ENCODE measurements at regions of chr19 and their contacts with region 1.

Region 1: GRCh38 chr19:35352448-35353304 is 5.0 kb downstream of the FFAR1 start:
- DNase-seq: peak; percentile 46 to 79 (median 62)
- ATAC-seq: peak; percentile 78 to 91
- H3K4me3 Mint-ChIP-seq: no peak overlapping the region
- H3K27ac Mint-ChIP-seq: peak overlapping the region in 3 of 10 donors; percentile 29 to 61 (median 52)
- H3K4me1 Mint-ChIP-seq: peaks cover 8 to 32% (median 11%) of the 10 kb centered on the region in 4 donors
- H3K27me3 Mint-ChIP-seq: peaks cover 0 to 15% (median 5%) of the 10 kb centered on the region in 5 donors

Region 2: DNA sequence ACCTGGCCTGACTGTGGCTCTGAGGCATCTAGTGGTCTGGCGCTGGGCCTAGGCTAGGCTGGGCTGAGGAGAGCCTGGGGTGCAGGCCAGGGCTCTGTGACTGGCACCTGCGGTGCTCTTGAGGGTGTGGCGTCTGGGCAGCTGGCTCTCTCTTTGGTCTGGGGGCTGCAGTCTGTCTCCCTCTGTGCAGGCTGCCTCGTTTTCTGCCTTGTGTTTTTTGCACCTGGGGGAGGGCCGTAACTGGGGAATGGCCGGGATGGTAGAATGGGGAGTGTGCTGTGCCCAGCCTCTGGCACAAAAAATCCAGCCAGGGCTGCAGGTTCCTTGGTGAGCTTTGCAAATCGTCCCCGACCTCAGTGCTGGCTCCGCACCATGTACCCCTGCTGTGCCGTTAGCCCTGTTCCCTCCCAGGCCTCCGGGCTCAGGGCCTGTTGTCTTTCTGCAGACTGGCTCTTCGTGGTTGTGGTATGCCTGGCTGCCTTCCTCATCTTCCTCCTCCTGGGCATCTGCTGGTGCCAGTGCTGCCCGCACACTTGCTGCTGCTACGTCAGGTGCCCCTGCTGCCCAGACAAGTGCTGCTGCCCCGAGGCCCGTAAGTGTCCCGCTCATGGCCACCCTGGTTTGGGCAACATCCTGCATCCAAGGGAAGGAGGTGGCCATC is 90.4 kb before region 1 on chr19:
- POLR2A ChIA-PET with region 1: no interaction called
- DNase-seq: peak in 2 of 10 donors; percentile 4 to 54
- ATAC-seq: no peak
- H3K4me3 Mint-ChIP-seq: no peak overlapping the region
- H3K27ac Mint-ChIP-seq: peak overlapping the region in 8 of 10 donors; percentile 55 to 72 (median 61)
- H3K4me1 Mint-ChIP-seq: peaks cover 23 to 52% (median 42%) of the 10 kb centered on the region in 4 donors
- H3K27me3 Mint-ChIP-seq: no peaks in the 10 kb centered on the region

Region 3: DNA sequence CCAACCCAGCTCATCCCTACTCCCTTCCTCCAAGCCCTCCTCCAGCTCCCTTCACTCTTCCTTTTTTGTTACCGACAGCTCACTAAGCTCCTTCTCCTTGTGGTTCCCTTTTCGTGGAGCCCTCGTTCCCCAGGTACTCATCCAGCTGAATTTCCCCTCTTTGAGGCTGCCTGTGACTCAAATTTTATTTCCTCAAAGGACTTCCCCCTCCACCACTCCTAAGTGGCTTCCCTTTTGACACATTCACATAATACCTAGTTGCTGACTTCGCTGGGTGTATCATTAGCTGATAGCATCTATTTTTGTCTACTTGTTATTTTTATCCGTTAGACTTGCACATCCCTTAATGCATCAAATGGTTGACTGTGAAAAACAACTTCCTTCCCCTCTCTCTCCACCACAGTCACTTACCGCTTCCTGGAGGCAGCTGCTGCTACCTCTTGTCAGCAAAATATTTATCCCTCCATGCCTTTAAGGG is 109.8 kb after region 1 on chr19:
- POLR2A ChIA-PET with region 1: interaction called, 12 read pairs
- DNase-seq: peak; percentile 13 to 87 (median 60)
- ATAC-seq: peak; percentile 95 to 96
- H3K4me3 Mint-ChIP-seq: peak overlapping the region; percentile 40 to 87 (median 73)
- H3K27ac Mint-ChIP-seq: peak overlapping the region; percentile 78 to 97 (median 90)
- H3K4me1 Mint-ChIP-seq: peaks cover 13 to 66% (median 29%) of the 10 kb centered on the region in 4 donors
- H3K27me3 Mint-ChIP-seq: no peaks in the 10 kb centered on the region

Region 4: GRCh38 chr19:35468637-35469036 is 116.0 kb after region 1 on chr19:
- POLR2A ChIA-PET with region 1: interaction called, 12 read pairs
- DNase-seq: peak; percentile 33 to 79 (median 62)
- ATAC-seq: peak; percentile 98 to 100
- H3K4me3 Mint-ChIP-seq: no peak overlapping the region
- H3K27ac Mint-ChIP-seq: no peak overlapping the region
- H3K4me1 Mint-ChIP-seq: peaks cover 0 to 23% (median 5%) of the 10 kb centered on the region in 4 donors
- H3K27me3 Mint-ChIP-seq: no peaks in the 10 kb centered on the region

Region 5: DNA sequence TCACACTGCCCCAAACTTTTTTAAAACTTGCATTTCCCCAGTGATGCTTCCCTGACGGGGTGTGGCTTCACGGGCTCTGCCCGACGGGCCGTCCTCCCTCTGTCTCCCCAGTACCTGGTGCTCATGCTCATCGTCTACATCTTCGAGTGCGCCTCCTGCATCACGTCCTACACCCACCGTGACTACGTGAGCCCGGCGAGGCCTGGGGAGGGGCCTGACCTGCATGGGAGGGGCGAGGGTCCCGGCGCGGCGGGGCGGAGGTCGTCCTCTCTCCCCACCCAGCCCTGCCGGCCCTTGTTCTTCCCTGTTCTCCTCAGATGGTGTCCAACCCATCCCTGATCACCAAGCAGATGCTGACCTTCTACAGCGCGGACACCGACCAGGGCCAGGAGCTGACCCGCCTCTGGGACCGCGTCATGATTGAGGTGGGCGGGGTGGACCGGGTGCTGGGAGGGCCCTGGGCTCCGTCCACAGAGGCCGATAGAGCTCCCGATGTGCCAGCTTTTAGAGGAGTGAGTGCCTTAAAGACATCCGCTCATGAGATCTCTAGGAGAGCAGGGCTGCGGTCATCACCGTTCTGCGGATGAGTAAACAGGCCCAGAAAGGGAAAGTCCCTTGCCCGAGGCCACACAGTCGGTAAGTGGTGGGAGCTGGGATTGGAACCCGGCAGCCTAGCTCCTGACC is 320.6 kb after region 1 on chr19:
- POLR2A ChIA-PET with region 1: no interaction called
- DNase-seq: peak in 8 of 10 donors; percentile 7 to 23 (median 14)
- ATAC-seq: peak; percentile 84 to 88
- H3K4me3 Mint-ChIP-seq: peak overlapping the region; percentile 65 to 84 (median 78)
- H3K27ac Mint-ChIP-seq: peak overlapping the region in 7 of 10 donors; percentile 19 to 64 (median 32)
- H3K4me1 Mint-ChIP-seq: peaks cover 7 to 10% (median 8%) of the 10 kb centered on the region in 4 donors
- H3K27me3 Mint-ChIP-seq: peaks cover 10 to 42% (median 20%) of the 10 kb centered on the region in 5 donors

Measured in naive thymus-derived CD8-positive, alpha-beta T cell (primary cell).